Thyroid gland (tissue), 4 donors: ENCODE measurements at regions of chr11 and their contacts with region 1.

Region 1: GRCh38 chr11:1546536-1547400 is 25.3 kb downstream of the DUSP8 start:
- DNase-seq: peak; percentile 67 to 68
- H3K4me3 ChIP-seq: peak overlapping the region in 1 of 3 donors; percentile 30
- H3K27ac ChIP-seq: peak overlapping the region in 1 of 3 donors; percentile 84
- H3K4me1 ChIP-seq: peaks cover 12 to 32% of the 10 kb centered on the region in 2 donors
- H3K27me3 ChIP-seq: no peaks in the 10 kb centered on the region
- CTCF ChIP-seq: peak; percentile 35 to 89 (median 80)
- POLR2A ChIP-seq: peak in 1 of 2 donors; percentile 43

Region 2: DNA sequence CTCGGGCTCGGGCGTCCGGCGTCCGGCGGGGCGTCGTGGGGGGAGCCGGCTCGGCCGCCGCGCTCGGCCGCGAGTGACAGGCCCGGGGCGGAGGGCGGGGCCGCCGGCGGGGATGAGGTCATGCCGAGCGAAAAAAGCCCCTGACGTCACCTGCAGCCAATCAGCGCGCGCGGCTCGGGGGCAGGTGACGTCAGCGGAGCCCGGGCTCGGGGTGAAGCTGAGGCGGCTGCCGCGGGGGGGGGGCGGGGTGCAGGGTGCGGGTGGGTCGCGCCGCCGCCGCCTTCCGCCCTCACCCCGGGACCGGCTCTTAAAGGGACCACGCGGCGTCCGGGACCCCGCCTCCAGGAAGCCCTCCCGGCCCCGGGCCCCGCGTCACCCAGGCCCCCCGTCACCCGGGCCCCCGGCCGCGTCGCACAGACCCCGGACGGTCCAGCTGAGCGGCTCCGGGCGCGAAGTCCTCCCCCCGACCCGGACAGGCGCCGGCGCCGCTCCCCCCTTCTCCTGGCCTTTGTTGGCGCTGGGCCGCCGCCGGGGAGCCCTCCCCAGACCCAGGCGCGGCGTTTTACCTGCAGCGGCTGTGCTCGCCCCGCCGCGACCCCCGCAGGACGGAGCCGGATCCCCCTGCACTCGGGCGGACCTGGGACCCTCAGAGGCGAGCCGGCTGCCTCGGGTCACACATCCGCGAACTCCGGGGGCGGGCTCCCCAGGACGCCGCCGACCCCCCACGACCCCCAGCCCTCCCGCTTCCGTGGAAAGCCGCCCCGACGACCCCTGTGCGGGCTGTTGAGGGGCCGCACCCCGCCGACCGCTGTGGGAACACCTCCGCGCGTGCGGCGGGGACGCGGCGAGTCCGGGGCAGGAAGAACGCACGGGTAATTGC is 25.7 kb after region 1 on chr11 and contains the start of gene DUSP8:
- intact Hi-C with region 1: loop called (anchors 2 kb)
- DNase-seq: peak; percentile 82 to 88
- H3K4me3 ChIP-seq: peak within 1 kb of the TSS in 1 of 3 donors; percentile 75
- H3K27ac ChIP-seq: peak within 1 kb of the TSS in 2 of 3 donors; percentile 64 to 85
- H3K4me1 ChIP-seq: peaks cover 15 to 33% of the 10 kb centered on the region in 2 donors
- H3K27me3 ChIP-seq: no peaks in the 10 kb centered on the region
- CTCF ChIP-seq: no peak
- POLR2A ChIP-seq: peak; percentile 14 to 76
- total RNA-seq, gene DUSP8: 1.3 to 3.5 (median 2.5) TPM

Region 3: DNA sequence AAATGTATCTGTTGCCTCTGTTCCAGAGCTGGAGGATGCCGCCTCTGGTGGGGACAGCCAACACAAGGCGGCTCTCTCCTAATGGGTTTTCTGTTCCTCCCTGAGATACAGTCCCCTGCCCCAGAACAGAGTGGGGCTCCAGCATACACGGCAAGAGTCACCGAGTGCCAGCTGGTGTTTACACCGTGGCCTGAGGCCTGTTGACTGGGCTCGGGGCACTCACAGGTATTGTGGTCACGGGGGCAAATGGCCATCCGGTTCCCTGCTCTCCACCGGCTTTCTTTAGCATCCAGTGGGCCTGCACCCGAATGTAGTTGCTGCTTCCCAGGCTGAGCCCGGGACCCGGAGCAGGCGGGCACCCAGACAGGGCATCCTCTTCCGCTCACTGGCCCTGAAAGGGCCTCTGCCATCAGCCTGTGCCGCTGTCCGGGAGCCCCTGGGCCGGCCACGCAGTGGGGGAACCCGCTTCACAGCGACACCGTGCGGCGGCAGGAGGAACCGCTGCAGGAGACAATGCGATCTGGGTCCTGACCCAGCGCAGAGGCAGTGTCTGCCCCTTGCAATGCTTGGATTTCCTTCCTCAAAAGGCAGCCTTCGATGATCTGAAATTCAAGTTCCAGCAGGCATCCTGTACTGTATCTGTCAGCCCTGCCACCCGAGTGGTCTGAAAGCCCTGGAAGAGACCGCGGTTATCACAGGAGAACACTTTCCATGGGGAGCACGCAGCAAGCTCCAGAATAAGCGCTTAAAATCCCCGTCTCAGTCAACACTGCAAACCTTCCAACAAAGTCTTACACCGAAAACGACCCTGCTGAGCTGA is 81.9 kb after region 1 on chr11:
- intact Hi-C with region 1: loop called (anchors 10 kb)
- DNase-seq: peak; percentile 45 to 46
- H3K4me3 ChIP-seq: no peak overlapping the region
- H3K27ac ChIP-seq: no peak overlapping the region
- H3K4me1 ChIP-seq: no peaks in the 10 kb centered on the region
- H3K27me3 ChIP-seq: peaks cover 4% of the 10 kb centered on the region
- CTCF ChIP-seq: peak; percentile 50 to 88 (median 72)
- POLR2A ChIP-seq: no peak

Region 4: DNA sequence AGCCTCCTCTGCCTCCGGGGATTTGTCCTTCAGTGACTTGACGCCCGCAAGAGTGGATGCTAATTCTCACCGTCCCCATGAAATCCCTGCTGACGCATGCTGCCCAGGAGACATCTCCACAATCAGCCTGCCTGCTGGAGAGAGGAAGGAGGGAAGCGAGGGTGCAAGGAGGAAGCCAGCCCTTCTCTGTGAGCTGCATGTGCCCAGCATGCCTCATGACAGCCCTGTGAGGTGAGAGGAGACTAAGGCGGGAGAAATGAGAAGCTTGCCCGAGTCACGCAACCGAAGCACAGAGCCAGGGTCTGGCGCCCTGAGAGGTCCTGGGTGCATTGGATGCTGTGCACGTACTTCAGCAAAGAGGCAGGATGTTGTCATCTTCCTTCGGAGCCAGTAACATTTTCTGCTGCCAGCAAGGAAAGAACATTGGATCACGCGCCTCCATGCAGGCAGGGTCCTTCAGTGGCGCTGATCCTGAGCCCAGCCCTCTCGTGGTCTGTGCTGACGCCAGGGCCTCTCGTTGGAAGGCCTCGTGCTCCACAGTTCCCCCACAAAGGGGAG is 123.0 kb after region 1 on chr11:
- intact Hi-C with region 1: no loop called
- DNase-seq: no peak
- H3K4me3 ChIP-seq: no peak overlapping the region
- H3K27ac ChIP-seq: no peak overlapping the region
- H3K4me1 ChIP-seq: no peaks in the 10 kb centered on the region
- H3K27me3 ChIP-seq: no peaks in the 10 kb centered on the region
- CTCF ChIP-seq: no peak
- POLR2A ChIP-seq: no peak